MCF 10A (cell line): ENCODE measurements at regions of chr3 and their contacts with region 1.

Region 1: GRCh38 chr3:52007291-52007690 is 11.6 kb upstream of the RPL29 start:
- DNase-seq: no peak
- H3K4me3 Mint-ChIP-seq: no peak overlapping the region
- H3K27ac Mint-ChIP-seq: no peak overlapping the region
- H3K4me1 Mint-ChIP-seq: no peaks in the 10 kb centered on the region
- H3K27me3 Mint-ChIP-seq: no peaks in the 10 kb centered on the region
- CTCF ChIP-seq: no peak

Region 2: DNA sequence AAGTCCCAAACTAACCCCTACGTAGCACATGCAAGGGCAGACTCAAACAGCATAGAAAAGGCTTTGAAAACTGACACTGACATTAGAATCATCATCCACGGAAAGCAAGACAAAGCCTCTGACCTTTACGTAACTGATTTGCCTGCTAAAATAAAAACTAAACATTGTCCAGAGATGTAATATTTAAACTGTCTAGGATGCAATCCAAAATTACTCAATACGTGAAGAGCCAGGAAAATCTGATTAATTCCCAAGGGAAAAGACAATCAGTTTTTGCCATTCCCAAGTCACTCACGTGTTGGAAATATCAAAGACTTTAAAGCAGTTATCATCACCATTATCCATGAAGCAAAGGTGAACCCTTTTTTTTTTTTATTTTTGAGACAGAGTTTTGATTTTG is 90.9 kb before region 1 on chr3:
- CTCF ChIA-PET with region 1: no interaction called
- POLR2A ChIA-PET with region 1: no interaction called
- intact Hi-C with region 1: no loop called
- DNase-seq: no peak
- H3K4me3 Mint-ChIP-seq: no peak overlapping the region
- H3K27ac Mint-ChIP-seq: no peak overlapping the region
- H3K4me1 Mint-ChIP-seq: no peaks in the 10 kb centered on the region
- H3K27me3 Mint-ChIP-seq: peaks cover 46% of the 10 kb centered on the region
- CTCF ChIP-seq: no peak

Region 3: GRCh38 chr3:51988286-51989146 is 18.8 kb before region 1 on chr3:
- CTCF ChIA-PET with region 1: no interaction called
- POLR2A ChIA-PET with region 1: no interaction called
- intact Hi-C with region 1: no loop called
- DNase-seq: no peak
- H3K4me3 Mint-ChIP-seq: no peak overlapping the region
- H3K27ac Mint-ChIP-seq: peak overlapping the region; percentile 47
- H3K4me1 Mint-ChIP-seq: peaks cover 20% of the 10 kb centered on the region
- H3K27me3 Mint-ChIP-seq: no peaks in the 10 kb centered on the region
- CTCF ChIP-seq: no peak

Region 4: DNA sequence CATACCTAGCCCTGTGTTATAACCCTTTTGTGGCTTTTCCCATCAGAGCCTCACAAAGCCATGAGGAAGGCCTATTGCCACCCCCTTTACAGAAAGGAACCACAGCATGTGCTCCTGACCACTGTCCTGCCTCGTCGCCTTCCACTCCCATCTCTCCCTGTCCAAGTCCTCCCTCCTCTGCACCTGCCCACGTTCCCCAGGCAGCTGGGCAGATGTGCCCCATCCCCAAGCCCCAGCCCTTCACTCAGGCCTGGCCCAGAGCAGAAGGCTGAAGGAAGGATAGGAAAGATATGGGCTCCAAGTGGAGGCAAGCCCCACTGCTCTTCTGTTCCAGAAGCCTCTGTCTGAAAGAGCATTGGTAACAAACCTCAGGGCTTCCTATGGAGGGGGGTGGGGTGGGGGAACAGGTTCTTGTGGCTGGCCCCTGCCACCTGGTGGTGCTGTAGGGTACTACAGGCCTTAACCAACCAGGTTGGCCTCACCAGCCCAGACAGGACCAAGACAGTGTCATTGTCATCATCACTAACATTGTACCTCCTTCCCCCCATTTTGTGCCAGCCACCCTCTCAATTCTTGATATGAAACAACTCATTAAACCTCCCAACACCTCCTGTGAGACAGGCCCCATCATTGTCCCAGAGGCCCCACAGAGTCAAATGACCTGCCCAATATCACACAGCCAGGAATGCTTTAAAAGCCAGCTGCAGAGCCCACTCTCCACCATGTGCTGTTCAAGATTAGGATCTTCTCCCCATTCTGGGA is 136.9 kb after region 1 on chr3:
- CTCF ChIA-PET with region 1: interaction called, 230 read pairs
- POLR2A ChIA-PET with region 1: no interaction called
- intact Hi-C with region 1: no loop called
- DNase-seq: peak; percentile 79
- H3K4me3 Mint-ChIP-seq: no peak overlapping the region
- H3K27ac Mint-ChIP-seq: peak overlapping the region; percentile 31
- H3K4me1 Mint-ChIP-seq: no peaks in the 10 kb centered on the region
- H3K27me3 Mint-ChIP-seq: no peaks in the 10 kb centered on the region
- CTCF ChIP-seq: peak; percentile 89